Heart right ventricle (tissue), 16 donors: ENCODE measurements at regions of chr14 and their contacts with region 1.

Region 1: GRCh38 chr14:48473944-48474343 is 798.5 kb upstream of the MDGA2 start:
- DNase-seq: no peak
- ATAC-seq: no peak
- H3K4me3 ChIP-seq: no peak overlapping the region
- H3K27ac ChIP-seq: no peak overlapping the region
- H3K4me1 ChIP-seq: no peaks in the 10 kb centered on the region
- H3K27me3 ChIP-seq: no peaks in the 10 kb centered on the region
- CTCF ChIP-seq: no peak

Region 2: GRCh38 chr14:48319823-48320222 is 154.1 kb before region 1 on chr14:
- intact Hi-C with region 1: no loop called
- DNase-seq: no peak
- ATAC-seq: no peak
- H3K4me3 ChIP-seq: no peak overlapping the region
- H3K27ac ChIP-seq: no peak overlapping the region
- H3K4me1 ChIP-seq: no peaks in the 10 kb centered on the region
- H3K27me3 ChIP-seq: no peaks in the 10 kb centered on the region
- CTCF ChIP-seq: no peak

Region 3: GRCh38 chr14:48333221-48333920 is 140.6 kb before region 1 on chr14:
- intact Hi-C with region 1: no loop called
- DNase-seq: no peak
- ATAC-seq: no peak
- H3K4me3 ChIP-seq: no peak overlapping the region
- H3K27ac ChIP-seq: no peak overlapping the region
- H3K4me1 ChIP-seq: no peaks in the 10 kb centered on the region
- H3K27me3 ChIP-seq: no peaks in the 10 kb centered on the region
- CTCF ChIP-seq: no peak

Region 4: DNA sequence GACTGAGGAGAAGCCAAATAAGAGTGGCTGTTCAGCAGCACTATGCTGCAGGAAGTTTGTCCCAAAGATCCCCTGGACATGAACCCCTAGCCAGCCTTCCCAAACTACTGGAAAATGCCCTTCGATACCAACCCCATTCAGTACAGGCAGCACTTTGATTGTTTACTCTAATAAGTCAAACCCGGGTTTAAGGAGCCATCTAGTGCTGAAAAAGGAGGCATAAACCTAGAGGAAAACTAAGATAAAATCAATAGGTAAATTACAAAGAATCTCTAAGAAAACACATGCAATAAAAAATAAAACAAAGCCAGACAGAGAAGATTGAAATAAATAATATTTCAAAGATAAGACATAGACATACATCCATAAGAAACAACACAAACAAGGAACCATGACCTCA is 340.6 kb after region 1 on chr14:
- intact Hi-C with region 1: loop called in 1 of 10 experiments (anchors 10 kb)
- DNase-seq: no peak
- ATAC-seq: no peak
- H3K4me3 ChIP-seq: no peak overlapping the region
- H3K27ac ChIP-seq: no peak overlapping the region
- H3K4me1 ChIP-seq: no peaks in the 10 kb centered on the region
- H3K27me3 ChIP-seq: no peaks in the 10 kb centered on the region
- CTCF ChIP-seq: peak in 2 of 9 donors; percentile 9 to 21